Activated B cell treated with CpG ODN at 0.5 μM for 24 hours (primary cell): ENCODE measurements at regions of chr6 and their contacts with region 1.

Region 1: GRCh38 chr6:106685833-106686232 is 56.5 kb downstream of the QRSL1 start:
- DNase-seq: no peak
- ATAC-seq: no peak
- H3K4me3 Mint-ChIP-seq: no peak overlapping the region
- H3K27ac Mint-ChIP-seq: no peak overlapping the region
- H3K4me1 Mint-ChIP-seq: peaks cover 45% of the 10 kb centered on the region
- H3K27me3 Mint-ChIP-seq: no peaks in the 10 kb centered on the region
- CTCF ChIP-seq: no peak

Region 2: GRCh38 chr6:106658469-106658868 is 27.4 kb before region 1 on chr6:
- CTCF ChIA-PET with region 1: no interaction called
- POLR2A ChIA-PET with region 1: no interaction called
- intact Hi-C with region 1: no loop called
- DNase-seq: no peak
- ATAC-seq: no peak
- H3K4me3 Mint-ChIP-seq: no peak overlapping the region
- H3K27ac Mint-ChIP-seq: peak overlapping the region; percentile 35
- H3K4me1 Mint-ChIP-seq: peaks cover 29% of the 10 kb centered on the region
- H3K27me3 Mint-ChIP-seq: no peaks in the 10 kb centered on the region
- CTCF ChIP-seq: no peak

Region 3: DNA sequence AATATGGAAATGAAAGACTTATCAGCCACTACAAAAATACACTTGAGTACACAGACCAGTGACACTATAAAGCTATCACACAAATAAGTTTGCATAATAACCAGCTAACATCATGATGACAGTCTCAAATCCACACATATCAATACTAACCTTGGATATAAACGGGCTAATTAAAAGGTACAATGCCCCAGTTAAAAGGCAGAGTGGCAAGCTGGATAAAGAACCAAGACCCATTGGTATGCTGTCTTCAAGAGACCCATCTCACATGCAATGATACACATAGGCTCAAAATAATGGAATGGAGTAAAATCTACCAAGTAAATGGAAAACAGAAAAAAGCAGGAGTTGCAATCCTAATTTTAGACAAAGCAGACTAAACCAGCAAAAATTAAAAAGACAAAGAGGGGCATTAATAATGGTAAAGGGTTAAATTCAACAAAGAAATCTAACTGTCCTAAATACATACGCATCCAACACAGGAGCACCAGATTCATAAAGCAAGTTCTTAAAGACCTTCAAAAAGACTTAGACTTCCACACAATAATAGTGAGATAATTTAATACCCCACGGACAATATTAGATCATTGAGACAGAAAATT is 125.4 kb after region 1 on chr6:
- CTCF ChIA-PET with region 1: no interaction called
- POLR2A ChIA-PET with region 1: interaction called, 10 read pairs
- intact Hi-C with region 1: no loop called
- DNase-seq: no peak
- ATAC-seq: no peak
- H3K4me3 Mint-ChIP-seq: no peak overlapping the region
- H3K27ac Mint-ChIP-seq: no peak overlapping the region
- H3K4me1 Mint-ChIP-seq: no peaks in the 10 kb centered on the region
- H3K27me3 Mint-ChIP-seq: no peaks in the 10 kb centered on the region
- CTCF ChIP-seq: no peak